HCT116 (cell line): ENCODE measurements at regions of chr9 and their contacts with region 1.

Region 1: DNA sequence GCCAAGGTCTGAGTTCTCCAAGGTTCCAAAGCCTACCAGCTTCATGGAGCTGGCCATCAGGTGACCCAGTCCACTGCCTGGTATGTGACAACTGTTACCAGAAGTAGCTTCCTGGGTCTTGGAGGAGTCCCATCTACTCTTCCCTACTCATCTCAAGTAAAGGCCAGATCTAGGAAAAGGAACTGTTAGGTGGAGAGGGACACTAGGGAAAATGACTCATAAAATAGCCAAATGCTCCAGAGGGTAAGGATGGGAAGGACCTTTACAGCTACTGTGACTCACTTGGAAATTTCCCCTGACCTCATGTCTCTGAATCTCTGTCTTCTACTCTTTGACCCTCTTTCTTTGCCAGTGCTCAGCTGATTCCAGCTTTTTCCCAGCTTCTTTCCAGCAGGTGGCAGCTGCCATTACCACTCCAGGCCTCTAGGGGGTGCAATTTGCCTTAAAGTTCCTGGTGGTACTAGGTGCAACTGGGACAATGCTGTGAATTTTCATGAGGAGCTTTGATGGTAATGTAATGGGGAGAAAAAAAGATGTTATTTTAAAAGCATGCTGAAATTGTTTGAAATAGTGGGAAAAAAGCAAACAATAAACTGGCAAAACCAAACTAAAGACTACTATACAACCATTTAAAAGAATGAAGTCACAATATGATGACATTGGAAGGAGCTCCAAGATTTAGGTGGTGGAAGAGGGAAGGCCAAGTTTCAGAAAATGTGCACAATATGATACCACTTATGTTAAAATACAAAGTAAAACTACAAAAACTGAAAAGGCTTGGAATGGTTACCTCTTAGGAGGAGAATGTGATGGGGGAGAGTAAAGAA is 27.1 kb upstream of the MYORG start:
- DNase-seq: peak; percentile 39
- ATAC-seq: peak; percentile 83
- H3K4me3 ChIP-seq: no peak overlapping the region
- H3K27ac ChIP-seq: no peak overlapping the region
- H3K4me1 ChIP-seq: 0 out of 4 replicates have a peak, but pooled peaks cover 0 to 4% of the 10 kb centered on the region in 2 experiments
- H3K27me3 ChIP-seq: no peaks in the 10 kb centered on the region
- CTCF ChIP-seq: peak; percentile 95 to 99 (median 99)
- POLR2A ChIP-seq: no peak
- RAD21 ChIP-seq: peak; percentile 81

Region 2: DNA sequence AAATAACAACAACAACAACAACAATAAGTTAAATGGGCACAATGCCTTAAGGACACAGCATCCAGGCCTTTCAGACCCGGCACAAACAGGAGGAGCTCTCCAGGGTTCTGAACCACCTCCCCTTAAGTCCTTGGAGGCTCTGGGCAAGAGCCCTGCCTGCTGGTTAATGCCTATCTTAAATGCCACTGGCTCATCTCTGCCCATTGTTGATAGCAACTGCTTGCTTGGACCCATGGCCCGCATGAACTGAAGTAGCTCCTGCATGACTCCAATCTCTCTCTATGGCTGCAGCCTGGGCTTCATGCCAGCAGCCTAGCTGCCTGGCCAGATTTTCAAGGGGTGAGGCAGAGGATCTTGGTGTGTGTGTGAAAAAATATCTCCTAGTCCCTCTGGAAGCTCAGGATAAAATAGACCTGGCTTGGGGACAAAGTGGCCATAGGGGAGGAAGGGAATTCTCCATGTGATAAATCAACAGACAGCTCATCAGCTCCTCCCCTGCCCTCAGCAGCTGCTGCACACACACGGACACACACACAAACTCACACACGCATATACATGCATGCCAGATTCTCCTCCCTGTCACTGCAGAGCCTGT is 27.2 kb after region 1 on chr9:
- CTCF ChIA-PET with region 1: interaction called, 11 read pairs
- POLR2A ChIA-PET with region 1: no interaction called
- RAD21 ChIA-PET with region 1: interaction called in 1 of 2 experiments, 4 read pairs
- intact Hi-C with region 1: no loop called
- DNase-seq: peak; percentile 13
- ATAC-seq: peak; percentile 70
- H3K4me3 ChIP-seq: no peak overlapping the region
- H3K27ac ChIP-seq: no peak overlapping the region
- H3K4me1 ChIP-seq: no peaks in the 10 kb centered on the region
- H3K27me3 ChIP-seq: no peaks in the 10 kb centered on the region
- CTCF ChIP-seq: no peak
- POLR2A ChIP-seq: no peak
- RAD21 ChIP-seq: no peak

Region 3: GRCh38 chr9:34591248-34591916 is 187.6 kb after region 1 on chr9:
- CTCF ChIA-PET with region 1: interaction called, 36 read pairs
- POLR2A ChIA-PET with region 1: no interaction called
- RAD21 ChIA-PET with region 1: interaction called, 3 read pairs
- intact Hi-C with region 1: loop called (anchors 10 kb)
- DNase-seq: peak; percentile 33
- ATAC-seq: peak; percentile 98
- H3K4me3 ChIP-seq: no peak overlapping the region
- H3K27ac ChIP-seq: no peak overlapping the region
- H3K4me1 ChIP-seq: peaks cover 0 to 8% of the 10 kb centered on the region in 2 experiments; a peak in 2 of 4 replicates
- H3K27me3 ChIP-seq: peaks cover 7% of the 10 kb centered on the region; the same call in 1 of the 2 replicates
- CTCF ChIP-seq: peak; percentile 81 to 92 (median 90)
- POLR2A ChIP-seq: no peak
- RAD21 ChIP-seq: peak; percentile 93

Region 4: DNA sequence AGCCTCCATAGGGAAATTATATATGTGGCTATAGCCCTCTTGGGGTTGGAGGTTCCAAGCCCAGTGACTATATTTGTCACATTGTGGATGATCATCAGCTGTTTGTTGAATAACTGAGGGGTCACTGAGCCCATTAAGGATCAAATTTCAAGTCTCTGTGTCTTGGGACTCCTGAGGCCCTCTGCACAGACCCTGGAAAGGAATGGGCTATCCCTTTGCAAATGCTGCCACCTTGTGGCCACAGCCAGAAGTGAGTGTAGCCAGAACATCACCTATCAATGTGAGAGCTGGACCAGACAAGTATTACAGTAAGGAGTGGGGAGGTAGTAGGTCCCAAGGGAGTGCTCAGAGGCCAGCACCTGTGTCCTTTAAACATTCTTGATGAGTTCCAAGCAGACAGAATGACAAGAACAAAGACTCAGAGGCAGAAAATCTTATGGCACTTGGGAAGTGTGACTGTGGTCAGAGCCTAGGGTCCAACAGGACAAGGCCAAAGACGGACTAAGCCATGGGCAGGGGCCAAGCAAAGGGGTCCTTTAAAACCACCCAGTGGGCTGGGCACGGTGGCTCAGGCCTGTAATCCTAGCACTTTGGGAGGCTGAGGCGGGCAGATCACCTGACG is 200.0 kb after region 1 on chr9:
- CTCF ChIA-PET with region 1: interaction called, 18 read pairs
- POLR2A ChIA-PET with region 1: no interaction called
- RAD21 ChIA-PET with region 1: interaction called, 3 to 4 read pairs
- intact Hi-C with region 1: loop called (anchors 10 kb)
- DNase-seq: peak; percentile 42
- ATAC-seq: peak; percentile 98
- H3K4me3 ChIP-seq: no peak overlapping the region
- H3K27ac ChIP-seq: no peak overlapping the region
- H3K4me1 ChIP-seq: peaks cover 0 to 10% of the 10 kb centered on the region in 2 experiments; a peak in 1 of 4 replicates
- H3K27me3 ChIP-seq: no peaks in the 10 kb centered on the region
- CTCF ChIP-seq: peak; percentile 84 to 99 (median 91); a peak in 5 of 6 replicates
- POLR2A ChIP-seq: no peak
- RAD21 ChIP-seq: peak; percentile 94